Ovary (tissue), 10 donors: ENCODE measurements at regions of chr1 and their contacts with region 1.

Region 1: GRCh38 chr1:13748610-13749505 is 48.9 kb downstream of the PRDM2 start:
- DNase-seq: peak; percentile 97 to 98 (median 97)
- H3K4me3 ChIP-seq: peak overlapping the region; percentile 71
- H3K27ac ChIP-seq: peak overlapping the region; percentile 88 to 90
- H3K4me1 ChIP-seq: peaks cover 5% of the 10 kb centered on the region
- H3K27me3 ChIP-seq: no peaks in the 10 kb centered on the region
- CTCF ChIP-seq: peak in 1 of 3 donors; percentile 26
- EP300 ChIP-seq: no peak
- POLR2A ChIP-seq: peak; percentile 61

Region 2: DNA sequence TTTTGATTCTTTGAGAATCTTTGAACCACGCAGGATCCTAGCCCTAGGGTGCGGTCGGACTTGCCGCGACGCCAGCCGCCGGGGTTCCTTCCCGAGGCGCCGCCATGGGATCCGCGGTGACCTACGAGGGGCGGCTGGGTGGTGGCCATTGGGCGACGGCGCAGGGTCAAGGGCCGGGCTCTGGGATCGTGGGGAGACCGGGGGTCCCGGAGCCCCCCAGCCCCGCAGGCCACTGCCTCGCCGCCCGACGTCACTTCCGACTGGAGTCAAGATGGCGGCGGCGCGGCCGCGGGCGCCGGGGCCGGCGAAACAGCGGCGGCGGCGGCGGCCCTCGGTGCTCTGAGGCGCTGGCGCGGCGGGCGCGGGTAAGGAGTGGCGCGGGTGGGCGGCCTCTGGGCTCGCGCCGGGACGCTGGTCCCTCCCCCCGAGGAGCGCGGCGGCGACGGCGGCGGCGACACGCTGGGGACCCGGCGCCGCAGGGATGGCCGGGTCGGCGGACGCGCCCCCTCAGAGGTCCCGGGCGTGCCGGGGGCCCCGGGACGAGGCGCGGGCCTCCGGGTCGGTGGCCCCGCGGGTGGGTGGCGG is 48.8 kb before region 1 on chr1 and contains the start of gene PRDM2:
- intact Hi-C with region 1: loop called in 1 of 4 experiments (anchors 5 kb)
- DNase-seq: peak; percentile 47 to 81 (median 68)
- H3K4me3 ChIP-seq: peak within 1 kb of the TSS; percentile 62
- H3K27ac ChIP-seq: peak within 1 kb of the TSS; percentile 97 to 99
- H3K4me1 ChIP-seq: peaks cover 7% of the 10 kb centered on the region
- H3K27me3 ChIP-seq: no peaks in the 10 kb centered on the region
- CTCF ChIP-seq: no peak
- EP300 ChIP-seq: no peak
- POLR2A ChIP-seq: no peak
- total RNA-seq, gene PRDM2: 32.3 to 81.9 (median 72.4) TPM